Prostate gland (tissue), 2 donors: ENCODE measurements at regions of chr20 and their contacts with region 1.

Region 1: DNA sequence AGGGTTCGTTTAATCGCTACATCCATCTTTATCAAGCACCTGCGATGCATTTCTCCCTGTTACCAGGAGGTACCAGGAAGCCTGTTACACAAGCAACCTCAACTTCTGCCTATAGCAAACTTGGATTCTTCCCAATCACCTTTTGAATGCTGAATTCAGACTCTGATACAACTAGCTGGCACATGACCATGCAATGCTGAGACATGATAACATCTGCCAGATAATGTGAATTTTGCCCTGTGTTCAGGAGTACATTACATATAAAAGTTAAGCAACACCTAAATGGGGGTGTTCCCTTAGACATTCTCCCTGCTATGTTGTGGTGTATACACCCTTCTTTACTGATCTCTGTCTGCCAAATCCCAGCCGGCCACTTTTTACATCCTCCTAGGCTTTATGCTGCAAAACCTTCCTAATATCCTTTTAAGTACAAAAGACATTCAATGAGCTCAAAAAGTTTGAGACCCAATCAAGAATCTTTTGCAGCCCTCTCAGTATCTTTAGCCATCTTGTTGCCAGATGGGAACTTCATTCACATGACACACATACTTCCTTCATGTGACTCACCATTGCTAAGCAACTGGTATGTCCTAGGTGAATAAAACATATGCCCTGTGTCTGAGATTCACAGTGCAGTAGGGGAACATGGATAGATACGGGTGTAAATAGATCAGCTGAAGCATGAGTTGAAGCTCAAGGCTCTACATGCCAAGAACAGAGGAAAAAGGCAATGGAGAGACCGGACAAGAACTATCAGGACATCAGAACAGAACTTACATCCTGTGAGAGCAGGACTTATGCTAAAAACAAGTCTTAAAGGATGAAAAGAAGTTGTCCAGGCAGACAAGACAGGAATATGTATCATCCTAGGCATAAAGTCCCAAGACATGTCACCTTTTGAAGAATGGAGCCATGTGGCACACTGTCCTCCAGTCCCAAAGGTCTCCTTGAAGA is 84.3 kb downstream of the ZHX3 start:
- DNase-seq: peak; percentile 31
- H3K4me3 ChIP-seq: no peak overlapping the region
- H3K27ac ChIP-seq: peak overlapping the region; percentile 4 to 26
- H3K4me1 ChIP-seq: no peaks in the 10 kb centered on the region
- H3K27me3 ChIP-seq: no peaks in the 10 kb centered on the region
- CTCF ChIP-seq: no peak
- POLR2A ChIP-seq: no peak

Region 2: DNA sequence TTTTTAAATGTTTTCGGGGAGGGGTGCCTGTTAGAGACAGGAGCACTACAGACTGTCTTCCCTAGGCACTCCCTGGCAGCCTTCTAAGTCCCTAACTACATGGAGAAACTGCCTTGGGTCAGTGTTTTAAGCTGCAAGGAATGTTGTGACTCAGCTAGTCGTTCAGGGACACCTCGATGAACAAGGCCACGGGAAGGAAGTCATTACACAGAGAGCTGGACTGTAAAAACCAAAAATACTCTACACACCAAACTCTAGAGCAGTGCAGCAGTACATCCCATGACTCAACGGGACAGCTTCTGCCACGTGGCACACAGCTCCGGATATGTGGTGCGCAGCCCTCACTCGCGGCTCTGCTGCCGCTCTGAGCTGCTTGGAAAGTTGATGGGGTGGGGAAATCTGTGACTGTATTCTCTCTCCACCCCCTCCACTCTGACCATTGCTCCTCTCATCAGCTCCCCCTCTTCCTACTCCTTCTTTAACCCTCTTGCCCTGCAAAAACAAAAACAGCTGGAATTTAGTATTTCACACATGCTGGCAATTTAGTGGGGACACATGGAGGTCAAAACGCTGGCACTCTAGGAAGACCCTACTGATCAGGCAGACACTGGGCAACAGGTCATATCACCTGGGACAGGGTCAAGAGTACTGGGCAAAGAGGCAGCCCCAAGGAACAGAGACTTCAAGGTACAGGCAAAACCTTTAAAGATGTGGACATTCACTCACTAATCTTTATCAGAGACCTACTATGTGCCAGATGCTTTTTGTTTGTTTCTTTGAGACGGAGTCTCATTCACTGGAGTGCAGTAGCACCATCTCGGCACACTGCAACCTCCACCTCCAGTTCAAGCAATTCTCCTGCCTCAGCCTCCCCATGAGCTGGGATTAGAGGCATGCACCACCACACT is 96.4 kb after region 1 on chr20:
- intact Hi-C with region 1: loop called (anchors 5 kb)
- DNase-seq: peak; percentile 33
- H3K4me3 ChIP-seq: no peak overlapping the region
- H3K27ac ChIP-seq: peak overlapping the region; percentile 53 to 54
- H3K4me1 ChIP-seq: no peaks in the 10 kb centered on the region
- H3K27me3 ChIP-seq: no peaks in the 10 kb centered on the region
- CTCF ChIP-seq: no peak
- POLR2A ChIP-seq: no peak